Activated CD4-positive, alpha-beta T cell treated with anti-CD3 and anti-CD28 coated beads for 36 hours (primary cell): ENCODE measurements at regions of chr19 and their contacts with region 1.

Region 1: GRCh38 chr19:41597600-41598041 is 21.7 kb downstream of the CEACAM21 start:
- DNase-seq: peak; percentile 83
- ATAC-seq: peak; percentile 83
- H3K4me3 Mint-ChIP-seq: peak overlapping the region; percentile 4
- H3K27ac Mint-ChIP-seq: no peak overlapping the region
- H3K4me1 Mint-ChIP-seq: peaks cover 12% of the 10 kb centered on the region
- H3K27me3 Mint-ChIP-seq: peaks cover 5% of the 10 kb centered on the region

Region 2: GRCh38 chr19:41263850-41264580 is 333.6 kb before region 1 on chr19 and contains the start of gene HNRNPUL1:
- CTCF ChIA-PET with region 1: no interaction called
- POLR2A ChIA-PET with region 1: no interaction called
- intact Hi-C with region 1: no loop called
- DNase-seq: peak; percentile 99
- ATAC-seq: peak; percentile 70
- H3K4me3 Mint-ChIP-seq: peak within 1 kb of the TSS; percentile 95
- H3K27ac Mint-ChIP-seq: peak within 1 kb of the TSS; percentile 100
- H3K4me1 Mint-ChIP-seq: peaks cover 34% of the 10 kb centered on the region
- H3K27me3 Mint-ChIP-seq: no peaks in the 10 kb centered on the region
- total RNA-seq, gene HNRNPUL1: 263 to 312 TPM

Region 3: DNA sequence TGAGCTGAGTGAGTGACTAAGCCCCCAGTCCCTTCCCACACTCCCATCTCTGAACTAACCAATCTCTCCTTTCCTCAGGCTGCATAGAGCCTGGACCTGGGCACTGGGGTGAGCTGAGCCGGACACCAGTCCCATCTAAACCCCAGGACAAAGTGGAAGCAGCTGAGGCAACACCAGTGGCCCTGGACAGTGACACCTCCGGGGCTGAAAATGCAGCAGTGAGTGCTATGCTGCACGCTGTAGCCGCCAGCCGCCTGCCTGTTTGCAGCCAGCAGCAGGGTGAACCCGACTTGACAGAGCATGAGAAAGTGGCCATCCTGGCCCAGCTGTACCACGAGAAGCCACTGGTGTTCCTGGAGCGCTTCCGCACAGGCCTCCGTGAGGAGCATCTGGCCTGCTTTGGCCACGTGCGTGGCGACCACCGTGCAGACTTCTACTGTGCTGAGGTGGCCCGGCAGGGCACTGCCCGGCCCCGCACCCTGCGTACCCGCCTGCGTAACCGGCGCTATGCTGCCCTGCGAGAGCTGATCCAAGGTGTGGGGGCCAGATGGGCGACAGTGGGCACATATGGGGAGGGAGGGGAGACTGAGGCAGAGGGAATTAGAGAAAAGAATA is 281.2 kb before region 1 on chr19:
- CTCF ChIA-PET with region 1: no interaction called
- POLR2A ChIA-PET with region 1: no interaction called
- intact Hi-C with region 1: no loop called
- DNase-seq: no peak
- ATAC-seq: no peak
- H3K4me3 Mint-ChIP-seq: no peak overlapping the region
- H3K27ac Mint-ChIP-seq: peak overlapping the region; percentile 48
- H3K4me1 Mint-ChIP-seq: peaks cover 22% of the 10 kb centered on the region
- H3K27me3 Mint-ChIP-seq: no peaks in the 10 kb centered on the region

Region 4: DNA sequence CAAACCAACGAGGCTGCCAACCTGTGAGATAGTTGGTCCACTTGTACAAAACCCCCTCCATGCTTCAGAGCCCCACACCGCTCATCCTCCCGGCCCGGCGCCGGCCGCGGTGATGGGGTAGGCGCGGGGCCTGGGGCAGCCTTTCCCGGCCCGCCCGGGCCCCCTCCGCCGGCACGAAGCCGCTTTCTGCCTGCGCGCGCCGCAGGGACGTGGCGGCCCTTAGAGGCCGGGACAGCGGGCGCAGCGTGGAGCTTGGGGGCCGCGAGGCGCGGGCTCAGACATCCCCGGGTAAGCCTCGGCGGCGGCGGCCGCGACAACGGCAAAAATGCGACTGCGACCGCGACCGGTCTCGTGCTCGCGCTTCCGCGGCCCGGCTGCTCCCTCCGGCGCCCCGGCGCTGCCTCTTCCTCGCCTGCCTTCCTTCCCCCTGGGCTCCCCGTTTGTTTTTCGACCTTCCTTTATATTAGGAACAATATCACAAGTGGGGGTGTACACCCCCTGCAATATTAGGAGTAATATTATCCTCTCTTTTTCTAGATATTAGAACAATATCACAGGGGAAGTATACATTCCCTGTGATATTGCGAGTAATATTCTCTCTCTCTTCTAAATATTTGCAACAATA is 75.6 kb before region 1 on chr19:
- CTCF ChIA-PET with region 1: interaction called, 3 read pairs
- POLR2A ChIA-PET with region 1: no interaction called
- intact Hi-C with region 1: loop called in 1 of 2 experiments (anchors 1 kb)
- DNase-seq: peak; percentile 64
- ATAC-seq: peak; percentile 51
- H3K4me3 Mint-ChIP-seq: peak overlapping the region; percentile 66
- H3K27ac Mint-ChIP-seq: peak overlapping the region; percentile 89
- H3K4me1 Mint-ChIP-seq: peaks cover 20% of the 10 kb centered on the region
- H3K27me3 Mint-ChIP-seq: peaks cover 14% of the 10 kb centered on the region

Region 5: DNA sequence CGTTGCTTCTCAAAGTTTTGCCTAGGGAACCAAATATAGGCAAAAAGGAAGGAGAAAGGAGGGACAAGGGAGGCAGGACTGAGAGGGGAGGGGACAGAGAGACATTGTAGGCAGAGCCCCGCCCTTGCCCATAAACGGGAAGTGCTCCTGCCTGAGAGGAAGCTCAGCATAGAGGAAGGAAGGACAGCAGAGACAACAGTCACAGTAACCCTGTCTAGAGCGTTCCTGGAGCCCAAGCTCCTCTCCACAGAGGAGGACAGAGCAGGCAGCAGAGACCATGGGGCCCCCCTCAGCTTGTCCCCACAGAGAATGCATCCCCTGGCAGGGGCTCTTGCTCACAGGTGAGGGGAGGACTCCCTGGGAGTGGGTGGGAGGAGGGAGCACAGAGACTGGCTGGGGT is 21.6 kb before region 1 on chr19 and contains the start of gene CEACAM21:
- CTCF ChIA-PET with region 1: interaction called, 62 read pairs
- POLR2A ChIA-PET with region 1: no interaction called
- intact Hi-C with region 1: loop called (anchors 1 kb)
- DNase-seq: peak; percentile 75
- ATAC-seq: peak; percentile 100
- H3K4me3 Mint-ChIP-seq: peak within 1 kb of the TSS; percentile 70
- H3K27ac Mint-ChIP-seq: peak within 1 kb of the TSS; percentile 83
- H3K4me1 Mint-ChIP-seq: peaks cover 24% of the 10 kb centered on the region
- H3K27me3 Mint-ChIP-seq: no peaks in the 10 kb centered on the region
- total RNA-seq, gene CEACAM21: 22.1 to 27.6 TPM